ENCODE measurements at regions of chr1 and their contacts with region 1.

Region 1: DNA sequence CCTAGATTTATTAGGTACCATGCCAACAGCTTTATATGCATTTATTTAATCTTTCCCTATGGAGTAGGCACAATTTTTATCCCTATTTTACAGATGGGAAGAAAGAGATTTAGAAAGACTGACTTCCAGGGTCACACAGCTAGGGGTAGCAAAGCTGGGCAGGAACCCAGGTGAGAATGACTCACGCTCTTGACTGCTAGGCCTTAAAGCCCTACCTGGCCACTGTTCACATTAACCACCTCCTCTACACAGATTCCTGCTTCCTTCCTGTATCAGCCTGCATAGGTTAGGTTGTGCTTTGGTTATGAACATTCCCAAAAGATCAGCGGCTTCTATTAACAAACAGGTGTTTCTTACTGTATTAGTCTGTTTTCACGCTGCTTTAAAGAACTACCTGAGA is 53.2 kb downstream of the DNAJC6 start:
- DNase-seq: no peak

Region 2: DNA sequence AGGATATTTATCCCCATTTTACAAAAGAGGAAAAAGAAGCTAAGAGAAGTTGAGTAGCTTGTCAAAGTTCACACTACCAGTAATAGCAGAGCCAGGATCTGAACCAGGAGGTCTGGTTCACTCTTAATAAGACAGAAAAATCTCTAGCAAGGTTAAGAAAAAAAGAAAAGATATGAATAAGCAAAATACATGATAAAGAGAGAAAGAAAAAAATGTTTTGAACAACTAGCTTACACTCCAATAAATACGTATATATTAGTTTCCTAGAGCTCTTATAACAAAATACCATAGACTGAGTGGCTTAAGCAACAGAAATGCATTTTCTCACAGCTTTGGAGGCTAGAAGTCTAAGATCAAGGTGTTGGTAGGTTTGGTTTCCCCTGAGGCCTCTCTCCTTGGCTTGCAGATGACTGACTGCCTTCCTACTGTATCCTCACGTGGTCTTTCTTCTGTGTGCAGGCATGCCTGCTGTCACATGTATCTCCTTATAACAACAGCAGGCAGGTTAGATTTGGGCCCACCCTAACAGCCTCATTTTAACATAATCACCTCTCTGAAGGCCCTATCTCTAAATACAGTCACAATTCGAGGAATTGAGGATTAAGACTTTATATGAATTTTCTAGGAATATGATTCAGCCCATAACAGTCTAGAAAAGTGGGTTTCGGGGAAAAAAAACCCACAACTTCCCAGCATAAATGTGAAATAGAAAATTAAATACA is 118.3 kb after region 1 on chr1:
- intact Hi-C with region 1: loop called in 1 of 2 experiments (anchors 10 kb)
- DNase-seq: no peak

Region 3: GRCh38 chr1:65539266-65540131 is 177.0 kb after region 1 on chr1:
- intact Hi-C with region 1: no loop called
- DNase-seq: no peak

Region 4: GRCh38 chr1:66984491-66984890 is 1621.9 kb after region 1 on chr1:
- intact Hi-C with region 1: no loop called
- DNase-seq: no peak